Common myeloid progenitor, CD34-positive (primary cell): ENCODE measurements at regions of chr2 and their contacts with region 1.

Region 1: GRCh38 chr2:11457935-11458334 is 8.0 kb downstream of the E2F6 start:
- DNase-seq: no peak
- H3K4me3 ChIP-seq: no peak overlapping the region
- H3K27ac ChIP-seq: no peak overlapping the region
- H3K4me1 ChIP-seq: peaks cover 0 to 15% (median 5%) of the 10 kb centered on the region in 4 experiments
- H3K27me3 ChIP-seq: no peaks in the 10 kb centered on the region

Region 2: GRCh38 chr2:10557506-10558265 is 900.2 kb before region 1 on chr2:
- CTCF ChIA-PET with region 1: no interaction called
- POLR2A ChIA-PET with region 1: no interaction called
- DNase-seq: no peak
- H3K4me3 ChIP-seq: no peak overlapping the region
- H3K27ac ChIP-seq: no peak overlapping the region
- H3K4me1 ChIP-seq: no peaks in the 10 kb centered on the region
- H3K27me3 ChIP-seq: peaks cover 0 to 3% (median 2%) of the 10 kb centered on the region in 5 experiments

Region 3: DNA sequence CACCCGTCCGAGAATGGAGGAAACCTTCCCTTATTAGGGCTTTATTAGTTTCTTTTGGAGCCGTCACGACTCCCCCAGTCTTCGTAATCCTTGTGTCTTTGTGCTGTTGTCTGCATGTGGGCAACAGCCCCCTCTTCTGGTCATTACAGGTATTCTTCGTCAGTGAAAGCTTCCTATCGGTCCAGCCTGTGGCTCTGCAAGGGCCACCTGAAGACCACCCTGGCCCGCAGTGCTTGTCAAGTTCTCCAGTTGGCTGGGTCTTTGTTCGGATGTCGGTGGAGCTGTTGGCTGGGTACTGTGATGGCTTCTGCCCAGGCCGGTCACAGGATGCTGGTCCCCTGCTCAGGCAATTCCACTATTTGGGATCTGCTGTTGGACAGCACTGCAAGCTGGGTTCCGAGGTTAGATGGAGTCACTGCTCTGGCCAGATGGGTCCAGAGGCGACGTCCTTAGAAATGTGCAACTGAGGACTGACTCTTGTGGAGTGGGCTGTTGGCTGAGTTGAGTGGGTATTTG is 11.1 kb before region 1 on chr2:
- CTCF ChIA-PET with region 1: interaction called, 11 read pairs
- POLR2A ChIA-PET with region 1: interaction called, 3 read pairs
- DNase-seq: peak; percentile 65 to 83 (median 78)
- H3K4me3 ChIP-seq: no peak overlapping the region
- H3K27ac ChIP-seq: no peak overlapping the region
- H3K4me1 ChIP-seq: no peaks in the 10 kb centered on the region
- H3K27me3 ChIP-seq: no peaks in the 10 kb centered on the region